ENCODE measurements at regions of chr6 and their contacts with region 1.

Region 1: DNA sequence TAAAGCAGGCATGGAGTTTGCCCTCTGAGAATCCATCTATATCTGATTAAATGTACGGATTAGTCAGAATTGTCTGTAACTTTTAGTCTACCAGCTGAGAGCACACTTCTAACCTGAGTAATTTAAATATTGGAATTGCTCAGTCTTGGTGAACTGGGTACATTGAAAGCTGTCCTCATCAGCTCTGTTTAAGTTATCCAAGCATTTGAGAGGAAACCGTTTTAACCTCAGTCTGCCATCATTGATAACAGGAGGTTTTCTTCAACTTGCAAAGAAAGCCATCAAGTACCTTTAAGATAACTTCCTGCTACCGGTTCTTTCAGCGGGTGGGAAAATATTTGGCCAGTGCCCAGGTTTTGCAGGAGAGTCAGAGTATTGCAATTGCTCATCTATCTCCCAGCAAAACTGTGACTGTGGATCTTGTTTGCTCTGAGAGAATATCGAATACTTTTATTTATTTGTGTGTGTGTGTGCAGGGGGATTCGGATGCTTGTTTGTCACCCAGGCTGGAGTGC is 31.1 kb upstream of the F13A1 start:
- DNase-seq: no peak
- H3K4me3 ChIP-seq: no peak overlapping the region
- H3K27ac ChIP-seq: no peak overlapping the region
- H3K4me1 ChIP-seq: no peaks in the 10 kb centered on the region
- H3K27me3 ChIP-seq: no peaks in the 10 kb centered on the region
- CTCF ChIP-seq: no peak
- POLR2A ChIP-seq: no peak

Region 2: DNA sequence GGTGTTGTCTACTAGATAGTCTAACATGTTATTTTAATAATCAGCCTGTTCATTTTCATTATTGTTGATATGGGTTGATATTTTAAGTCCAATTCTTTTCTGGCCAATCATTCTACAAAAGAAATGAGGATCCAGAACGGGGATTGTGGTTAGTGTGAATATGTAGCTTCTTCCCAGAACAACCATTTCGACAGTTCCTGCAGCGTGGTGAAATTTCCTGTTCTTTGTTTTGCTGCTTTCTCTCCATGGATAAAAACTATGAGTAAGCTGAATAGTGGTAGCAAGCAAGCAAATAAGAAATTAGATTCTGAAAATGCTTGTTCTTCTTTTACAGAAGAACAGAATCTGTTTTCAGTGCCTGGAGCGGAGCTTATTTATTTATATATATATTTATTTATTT is 34.4 kb after region 1 on chr6:
- CTCF ChIA-PET with region 1: no interaction called
- POLR2A ChIA-PET with region 1: no interaction called
- dilution Hi-C with region 1: no loop called
- intact Hi-C with region 1: no loop called
- DNase-seq: no peak
- H3K4me3 ChIP-seq: no peak overlapping the region
- H3K27ac ChIP-seq: no peak overlapping the region
- H3K4me1 ChIP-seq: no peaks in the 10 kb centered on the region
- H3K27me3 ChIP-seq: no peaks in the 10 kb centered on the region
- CTCF ChIP-seq: no peak
- POLR2A ChIP-seq: no peak

Region 3: DNA sequence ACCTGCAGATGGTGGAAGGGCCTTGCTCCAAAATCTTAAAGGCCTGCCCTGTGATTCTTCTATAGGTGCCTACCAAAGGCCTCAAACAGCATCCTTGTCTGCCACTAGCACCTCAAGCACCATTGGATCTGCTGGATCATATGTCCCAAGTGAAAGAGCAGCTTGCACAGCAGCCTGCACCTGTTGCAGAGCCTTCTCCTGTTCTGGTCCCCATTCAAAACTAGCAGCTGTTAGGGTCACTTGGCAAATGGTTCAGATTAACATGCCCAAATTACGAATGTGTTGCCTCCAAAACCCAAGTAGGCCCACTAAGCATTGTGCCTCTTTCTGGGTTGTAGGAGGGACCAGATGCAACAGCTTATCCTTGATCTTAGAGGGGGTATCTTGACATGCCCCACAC is 68.5 kb after region 1 on chr6:
- CTCF ChIA-PET with region 1: no interaction called
- POLR2A ChIA-PET with region 1: no interaction called
- dilution Hi-C with region 1: no loop called
- intact Hi-C with region 1: loop called (anchors 2 kb)
- DNase-seq: no peak
- H3K4me3 ChIP-seq: no peak overlapping the region
- H3K27ac ChIP-seq: no peak overlapping the region
- H3K4me1 ChIP-seq: no peaks in the 10 kb centered on the region
- H3K27me3 ChIP-seq: no peaks in the 10 kb centered on the region
- CTCF ChIP-seq: no peak
- POLR2A ChIP-seq: no peak